Motor neuron (in vitro differentiated cells): ENCODE measurements at regions of chr1 and their contacts with region 1.

Region 1: GRCh38 chr1:107142140-107142542 is 1.3 kb downstream of the NTNG1 start:
- ATAC-seq: peak in 4 of 8 experiments; percentile 1 to 7 (median 2)
- H3K4me3 ChIP-seq: peak overlapping the region; percentile 55 to 87 (median 81)
- H3K27ac ChIP-seq: no peak overlapping the region
- H3K4me1 ChIP-seq: peaks cover 18 to 33% of the 10 kb centered on the region in 2 donors

Region 2: DNA sequence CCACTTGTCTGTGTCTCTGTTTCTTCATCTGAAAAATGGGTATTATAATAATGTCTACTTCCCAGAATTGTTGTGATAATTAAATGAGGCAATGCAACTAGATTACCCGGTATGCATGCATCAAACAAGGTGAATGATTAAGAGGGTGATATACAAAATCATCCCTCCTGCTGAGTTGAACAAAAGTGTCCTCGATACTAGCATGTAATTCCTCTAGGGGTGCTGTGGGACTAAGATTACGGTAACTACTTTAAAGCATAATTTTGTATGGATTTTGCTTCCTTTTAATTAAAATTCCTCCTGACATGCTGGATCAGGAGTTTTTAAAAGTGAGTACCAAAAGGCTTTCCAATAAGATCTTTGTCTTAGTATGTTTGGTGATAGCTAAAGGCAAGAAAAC is 184.4 kb before region 1 on chr1:
- in situ Hi-C with region 1: loop called in 1 of 9 experiments (anchors 25 kb)
- ATAC-seq: no peak
- H3K4me3 ChIP-seq: no peak overlapping the region
- H3K27ac ChIP-seq: no peak overlapping the region
- H3K4me1 ChIP-seq: peaks cover 7 to 8% of the 10 kb centered on the region in 2 donors

Region 3: DNA sequence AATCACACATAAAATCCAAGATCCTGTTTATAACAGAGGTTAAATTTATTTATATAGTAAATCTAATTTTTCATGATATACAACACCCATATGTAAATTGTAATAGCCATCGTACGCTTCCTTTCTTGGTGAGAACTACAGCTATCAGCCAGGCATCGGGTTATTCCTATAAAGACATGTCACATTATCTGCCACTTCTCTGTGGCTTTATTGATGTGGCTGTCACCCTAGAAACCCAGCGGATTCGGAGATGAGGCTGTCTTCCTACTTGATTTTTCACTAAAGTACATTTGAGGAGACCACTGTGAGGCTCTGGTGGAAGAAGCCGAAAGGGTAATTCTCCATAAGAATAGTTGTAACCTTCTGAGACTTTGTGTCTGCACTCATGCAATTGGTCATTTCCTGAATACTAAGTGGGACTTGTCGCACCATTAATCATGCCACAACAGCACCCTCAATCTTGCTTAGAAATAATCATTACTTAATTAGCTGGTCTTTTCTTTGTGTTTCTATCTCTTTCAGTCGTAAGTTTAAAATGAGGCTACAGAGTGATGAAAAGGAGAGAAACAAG is 104.7 kb after region 1 on chr1:
- in situ Hi-C with region 1: loop called in 1 of 9 experiments (anchors 25 kb)
- ATAC-seq: peak in 5 of 8 experiments; percentile 70 to 86 (median 81)
- H3K4me3 ChIP-seq: peak overlapping the region in 1 of 5 donors; percentile 1
- H3K27ac ChIP-seq: no peak overlapping the region
- H3K4me1 ChIP-seq: peaks cover 26 to 40% of the 10 kb centered on the region in 2 donors

Region 4: DNA sequence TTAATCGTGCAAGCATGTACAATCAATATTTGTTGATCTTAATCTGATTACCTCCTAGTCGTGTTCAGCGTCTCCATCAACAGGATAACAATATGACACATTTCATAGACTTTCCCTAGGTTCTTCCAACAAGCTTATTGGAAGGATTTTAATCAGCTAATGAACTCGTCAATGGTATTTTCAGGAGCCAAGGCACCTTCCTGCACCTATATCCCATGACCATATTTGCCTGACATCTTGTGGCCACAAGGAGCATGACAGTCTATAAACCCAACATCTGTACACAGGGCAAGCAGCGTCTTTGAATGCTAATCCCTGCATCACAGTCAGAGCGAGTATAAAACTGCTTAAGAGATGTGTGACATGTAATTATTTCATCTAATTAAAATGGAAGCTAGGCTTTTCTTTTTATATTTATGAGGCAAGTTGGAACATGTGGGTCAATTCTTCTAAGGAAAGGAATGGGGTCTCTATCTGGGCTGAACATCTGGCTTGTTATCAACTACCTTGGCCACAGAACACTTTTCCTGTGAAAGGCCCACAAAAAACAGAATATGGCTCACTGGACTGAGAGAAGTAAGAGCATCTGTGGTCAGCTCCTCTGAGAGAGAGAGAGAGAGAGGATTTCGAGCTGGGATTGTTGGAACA is 387.5 kb after region 1 on chr1:
- in situ Hi-C with region 1: loop called in 1 of 9 experiments (anchors 25 kb)
- ATAC-seq: peak; percentile 70 to 96 (median 94)
- H3K4me3 ChIP-seq: no peak overlapping the region
- H3K27ac ChIP-seq: no peak overlapping the region
- H3K4me1 ChIP-seq: peaks cover 18 to 19% of the 10 kb centered on the region in 2 donors

Region 5: GRCh38 chr1:108881369-108881768 is 1739.2 kb after region 1 on chr1:
- in situ Hi-C with region 1: no loop called
- ATAC-seq: no peak
- H3K4me3 ChIP-seq: no peak overlapping the region
- H3K27ac ChIP-seq: no peak overlapping the region
- H3K4me1 ChIP-seq: peaks cover 3 to 11% of the 10 kb centered on the region in 2 donors